ENCODE measurements at regions of chr21 and their contacts with region 1.

Region 1: GRCh38 chr21:29347274-29347681 is 48.6 kb downstream of the BACH1 start:
- DNase-seq: no peak
- ATAC-seq: peak in 1 of 2 donors; percentile 11

Region 2: GRCh38 chr21:29164325-29164942 is 182.8 kb before region 1 on chr21:
- intact Hi-C with region 1: loop called in 1 of 2 experiments (anchors 5 kb)
- DNase-seq: no peak
- ATAC-seq: peak; percentile 74 to 89

Region 3: GRCh38 chr21:29403922-29404538 is 56.8 kb after region 1 on chr21:
- intact Hi-C with region 1: no loop called
- DNase-seq: no peak
- ATAC-seq: peak in 1 of 2 donors; percentile 25

Region 4: GRCh38 chr21:29470397-29470796 is 123.1 kb after region 1 on chr21:
- intact Hi-C with region 1: no loop called
- DNase-seq: no peak
- ATAC-seq: no peak

Measured in left cardiac atrium (tissue), 4 donors.